ENCODE measurements at regions of chr22 and their contacts with region 1.

Region 1: DNA sequence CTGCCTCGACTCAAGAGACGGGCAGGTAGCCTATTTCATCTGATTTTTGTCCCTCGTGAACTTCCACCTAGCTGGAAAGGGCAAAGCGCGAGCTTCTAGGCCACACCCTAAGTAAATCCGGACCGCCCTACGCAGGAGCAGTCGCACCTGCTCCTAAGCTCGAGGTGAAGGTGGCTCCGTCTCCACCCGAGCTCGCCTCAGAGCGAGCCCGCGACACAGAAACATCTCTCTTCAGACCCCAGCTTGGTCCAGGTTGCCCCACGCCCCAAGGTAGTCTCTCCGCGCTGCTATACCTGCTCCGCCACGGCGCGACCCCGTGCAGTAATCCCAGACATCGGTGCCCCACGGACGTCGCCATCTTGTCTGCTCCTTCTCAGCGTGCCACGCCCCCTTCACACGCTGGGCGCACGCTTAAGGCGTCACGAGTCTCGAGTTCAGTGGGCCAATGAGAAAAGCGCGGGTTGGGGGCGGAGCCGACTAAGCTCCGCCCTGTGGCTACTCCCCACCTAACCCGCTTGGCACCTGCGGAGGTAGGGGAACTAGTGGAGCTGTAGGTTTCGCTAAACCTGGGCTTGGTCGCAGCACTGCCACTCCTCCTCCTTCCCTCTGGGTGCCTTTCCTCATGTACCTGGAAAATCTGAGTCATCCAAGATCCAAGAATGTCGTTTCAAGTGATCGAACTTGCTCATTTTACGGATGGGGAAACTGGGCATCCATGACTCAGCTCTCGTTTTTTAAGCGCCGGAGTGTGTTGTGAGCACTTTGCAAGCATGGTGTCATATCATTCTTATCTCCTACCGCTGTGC is at the start of gene PISD:
- DNase-seq: peak; percentile 74
- H3K4me3 ChIP-seq: peak within 1 kb of the TSS; percentile 98
- H3K27ac ChIP-seq: peak within 1 kb of the TSS; percentile 88
- H3K27me3 ChIP-seq: no peaks in the 10 kb centered on the region
- CTCF ChIP-seq: no peak
- polyA plus RNA-seq, gene PISD: 21.6 and 26.6 TPM in 2 replicates

Region 2: GRCh38 chr22:31579835-31580242 is 82.2 kb before region 1 on chr22:
- CTCF ChIA-PET with region 1: no interaction called
- POLR2A ChIA-PET with region 1: no interaction called
- DNase-seq: no peak
- H3K4me3 ChIP-seq: no peak overlapping the region
- H3K27ac ChIP-seq: no peak overlapping the region
- H3K27me3 ChIP-seq: no peaks in the 10 kb centered on the region
- CTCF ChIP-seq: no peak

Region 3: DNA sequence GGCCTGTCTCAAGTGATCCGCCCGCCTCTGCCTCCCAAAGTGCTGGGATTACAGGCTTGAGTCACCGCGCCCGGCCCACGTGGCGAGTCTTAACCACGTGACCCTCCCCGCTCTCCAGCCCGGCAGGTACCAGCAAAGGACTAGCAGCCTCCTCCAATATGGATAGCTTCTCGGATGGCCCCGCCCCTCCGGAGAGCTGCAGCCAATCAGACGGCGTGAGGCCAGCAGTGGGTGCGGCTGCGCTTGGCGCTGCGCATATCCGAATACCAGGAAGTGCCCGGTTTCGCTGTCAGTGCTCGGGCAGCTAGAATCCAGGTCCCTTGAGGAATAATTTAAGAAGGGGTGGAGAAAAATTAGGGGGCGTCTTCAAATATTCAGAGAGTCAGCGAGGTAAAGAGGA is 14.6 kb after region 1 on chr22:
- CTCF ChIA-PET with region 1: interaction called, 29 read pairs
- POLR2A ChIA-PET with region 1: interaction called, 3 read pairs
- DNase-seq: peak; percentile 57
- H3K4me3 ChIP-seq: peak overlapping the region; percentile 51
- H3K27ac ChIP-seq: peak overlapping the region; percentile 21
- H3K27me3 ChIP-seq: no peaks in the 10 kb centered on the region
- CTCF ChIP-seq: no peak

Region 4: DNA sequence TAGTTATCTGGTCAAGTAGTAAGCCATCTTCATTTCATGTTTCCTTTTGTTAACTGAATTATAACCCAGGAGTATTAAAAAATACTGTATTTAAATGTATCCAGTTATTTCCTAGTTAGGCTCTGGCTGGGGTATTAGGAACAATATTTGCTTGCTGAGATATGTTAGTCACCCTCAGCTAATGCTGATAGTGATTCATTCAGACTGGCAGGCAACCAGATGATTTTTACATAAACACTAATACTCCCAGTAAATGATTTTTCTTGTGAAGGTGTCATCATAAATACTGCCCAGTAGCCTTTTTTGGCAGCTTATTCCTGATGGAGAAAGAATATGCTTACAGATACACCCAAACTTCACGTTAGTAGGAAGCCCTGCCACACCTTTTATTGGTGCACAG is 290.4 kb after region 1 on chr22:
- CTCF ChIA-PET with region 1: interaction called, 13 read pairs
- POLR2A ChIA-PET with region 1: no interaction called
- DNase-seq: peak; percentile 49
- H3K4me3 ChIP-seq: no peak overlapping the region
- H3K27ac ChIP-seq: no peak overlapping the region
- H3K27me3 ChIP-seq: no peaks in the 10 kb centered on the region
- CTCF ChIP-seq: no peak